Esophagus muscularis mucosa (tissue), 4 donors: ENCODE measurements at regions of chr19 and their contacts with region 1.

Region 1: DNA sequence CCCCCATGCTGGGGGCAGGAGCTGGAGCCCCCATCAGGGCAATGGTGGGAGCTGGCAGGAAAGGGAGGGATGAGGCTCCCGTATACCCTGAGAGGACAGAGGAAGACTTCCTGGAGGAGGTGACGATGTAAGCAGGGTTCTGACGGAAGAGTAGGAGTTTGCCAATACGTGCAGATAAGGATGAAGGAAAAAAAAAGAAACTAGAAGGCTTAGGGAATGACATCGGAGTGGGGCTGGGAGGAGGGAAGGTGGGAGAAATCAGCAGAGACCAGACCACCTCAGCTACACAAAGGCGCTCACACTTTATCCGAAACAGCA is 32.3 kb downstream of the ARHGEF18 start:
- DNase-seq: no peak
- H3K4me3 ChIP-seq: no peak overlapping the region
- H3K27ac ChIP-seq: no peak overlapping the region
- H3K4me1 ChIP-seq: peaks cover 0 to 12% (median 0%) of the 10 kb centered on the region in 4 donors
- H3K27me3 ChIP-seq: no peaks in the 10 kb centered on the region
- CTCF ChIP-seq: no peak
- EP300 ChIP-seq: no peak
- POLR2A ChIP-seq: no peak

Region 2: GRCh38 chr19:7355151-7355820 is 25.7 kb before region 1 on chr19:
- intact Hi-C with region 1: loop called (anchors 2 kb)
- DNase-seq: no peak
- H3K4me3 ChIP-seq: peak overlapping the region in 3 of 4 donors; percentile 31 to 42 (median 36)
- H3K27ac ChIP-seq: peak overlapping the region in 2 of 4 donors; percentile 48 to 65
- H3K4me1 ChIP-seq: peaks cover 0 to 20% (median 2%) of the 10 kb centered on the region in 4 donors
- H3K27me3 ChIP-seq: no peaks in the 10 kb centered on the region
- CTCF ChIP-seq: no peak
- EP300 ChIP-seq: no peak
- POLR2A ChIP-seq: no peak